H1 (cell line): ENCODE measurements at regions of chr2 and their contacts with region 1.

Region 1: GRCh38 chr2:12931186-12931844 is 214.6 kb downstream of the TRIB2 start:
- DNase-seq: no peak
- H3K4me3 ChIP-seq: no peak overlapping the region
- H3K27ac ChIP-seq: no peak overlapping the region
- H3K4me1 ChIP-seq: peaks cover 3 to 11% (median 10%) of the 10 kb centered on the region in 4 experiments; a peak in 5 of 7 replicates
- H3K27me3 ChIP-seq: no peaks in the 10 kb centered on the region
- CTCF ChIP-seq: peak in 2 of 3 experiments; percentile 61 to 85; a peak in 3 of 4 replicates
- EP300 ChIP-seq: no peak
- POLR2A ChIP-seq: no peak
- RAD21 ChIP-seq: peak; percentile 80 to 81

Region 2: DNA sequence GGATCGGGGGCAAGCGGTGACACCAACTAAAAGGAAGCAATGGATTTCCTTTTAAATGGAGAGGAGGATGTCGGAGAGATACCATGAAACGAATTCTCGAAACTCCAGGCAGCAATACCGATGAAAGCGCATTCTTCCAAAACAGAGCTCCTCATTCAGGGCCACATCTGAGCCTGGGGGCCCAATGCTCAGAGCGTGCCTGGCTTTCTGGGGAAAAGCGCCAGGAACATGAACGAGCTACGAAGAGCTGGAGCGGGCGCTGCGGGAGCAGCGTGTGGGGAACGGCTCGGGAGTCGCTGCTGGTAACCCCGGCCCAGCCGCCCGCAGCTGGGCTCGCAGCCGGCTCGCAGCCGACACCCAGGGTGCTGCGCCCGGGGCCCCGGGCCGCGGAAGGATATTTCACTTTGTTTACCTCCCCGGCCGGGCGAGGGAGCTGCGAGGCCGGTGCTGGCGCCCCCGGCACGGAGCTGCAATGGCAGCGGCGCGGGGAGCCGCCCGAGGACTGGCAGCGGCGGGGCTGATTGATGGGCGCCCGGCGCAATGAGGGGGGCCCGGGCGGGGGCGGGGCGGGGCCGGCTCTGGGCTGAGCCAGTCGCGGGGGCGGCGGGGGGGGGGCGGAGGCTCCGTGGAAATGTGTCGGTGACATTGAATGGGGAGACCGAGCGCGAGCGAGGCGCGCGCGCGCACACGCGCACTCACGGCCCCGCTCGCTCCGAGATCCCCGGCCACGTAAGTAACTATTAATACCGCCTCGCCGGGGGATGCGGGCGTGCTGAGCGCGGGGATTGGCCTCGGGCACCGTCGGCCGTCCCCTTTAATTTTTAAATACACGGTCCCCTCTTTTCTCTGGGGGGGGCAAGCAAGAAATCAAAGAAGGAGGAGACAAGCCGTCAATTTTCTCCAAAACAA is 214.8 kb before region 1 on chr2 and contains the start of gene TRIB2:
- CTCF ChIA-PET with region 1: interaction called, 22 read pairs
- POLR2A ChIA-PET with region 1: no interaction called
- DNase-seq: peak in 1 of 2 experiments; percentile 79
- H3K4me3 ChIP-seq: peak within 1 kb of the TSS; percentile 74 to 95 (median 83)
- H3K27ac ChIP-seq: peak within 1 kb of the TSS; percentile 70; the same call in 1 of the 2 replicates
- H3K4me1 ChIP-seq: peaks cover 2 to 12% (median 5%) of the 10 kb centered on the region in 4 experiments; a peak in 6 of 7 replicates
- H3K27me3 ChIP-seq: no peaks in the 10 kb centered on the region
- CTCF ChIP-seq: peak in 1 of 3 experiments; percentile 26; a peak in 1 of 4 replicates
- EP300 ChIP-seq: no peak
- POLR2A ChIP-seq: 0 out of 3 replicates have a peak, but pooled peaks of 1 of the 2 experiments have one; percentile 29
- RAD21 ChIP-seq: peak in 1 of 2 experiments; percentile 43; a peak in 1 of 4 replicates
- total RNA-seq, gene TRIB2: 57.0 and 57.3 TPM in 2 replicates

Region 3: DNA sequence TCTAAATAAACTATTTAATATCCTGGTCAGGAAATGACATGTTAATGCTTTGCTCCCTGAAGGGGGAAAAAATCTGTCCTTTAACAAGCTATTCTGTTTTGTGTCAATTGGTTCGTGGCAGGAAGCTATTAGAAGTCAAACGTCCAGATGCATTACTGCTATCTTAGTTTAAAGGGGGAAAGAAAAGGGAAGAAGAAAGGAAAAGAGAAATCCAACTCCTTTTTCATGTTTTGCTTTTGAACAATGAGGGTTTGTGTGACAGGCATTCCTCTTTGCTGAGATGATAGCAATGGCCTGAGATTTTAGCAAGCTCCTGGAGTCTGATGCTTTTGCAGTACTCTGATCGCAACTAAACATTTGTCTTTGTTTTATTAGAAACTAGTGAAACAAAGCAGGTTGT is 189.9 kb before region 1 on chr2:
- CTCF ChIA-PET with region 1: interaction called, 11 read pairs
- POLR2A ChIA-PET with region 1: no interaction called
- DNase-seq: no peak
- H3K4me3 ChIP-seq: no peak overlapping the region
- H3K27ac ChIP-seq: no peak overlapping the region
- H3K4me1 ChIP-seq: no peaks in the 10 kb centered on the region
- H3K27me3 ChIP-seq: no peaks in the 10 kb centered on the region
- CTCF ChIP-seq: no peak
- EP300 ChIP-seq: no peak
- POLR2A ChIP-seq: no peak
- RAD21 ChIP-seq: no peak

Region 4: GRCh38 chr2:12839339-12839738 is 92.0 kb before region 1 on chr2:
- CTCF ChIA-PET with region 1: no interaction called
- POLR2A ChIA-PET with region 1: no interaction called
- DNase-seq: no peak
- H3K4me3 ChIP-seq: no peak overlapping the region
- H3K27ac ChIP-seq: no peak overlapping the region
- H3K4me1 ChIP-seq: no peaks in the 10 kb centered on the region; a peak in 1 of 7 replicates
- H3K27me3 ChIP-seq: no peaks in the 10 kb centered on the region
- CTCF ChIP-seq: no peak
- EP300 ChIP-seq: no peak
- POLR2A ChIP-seq: no peak
- RAD21 ChIP-seq: no peak

Region 5: DNA sequence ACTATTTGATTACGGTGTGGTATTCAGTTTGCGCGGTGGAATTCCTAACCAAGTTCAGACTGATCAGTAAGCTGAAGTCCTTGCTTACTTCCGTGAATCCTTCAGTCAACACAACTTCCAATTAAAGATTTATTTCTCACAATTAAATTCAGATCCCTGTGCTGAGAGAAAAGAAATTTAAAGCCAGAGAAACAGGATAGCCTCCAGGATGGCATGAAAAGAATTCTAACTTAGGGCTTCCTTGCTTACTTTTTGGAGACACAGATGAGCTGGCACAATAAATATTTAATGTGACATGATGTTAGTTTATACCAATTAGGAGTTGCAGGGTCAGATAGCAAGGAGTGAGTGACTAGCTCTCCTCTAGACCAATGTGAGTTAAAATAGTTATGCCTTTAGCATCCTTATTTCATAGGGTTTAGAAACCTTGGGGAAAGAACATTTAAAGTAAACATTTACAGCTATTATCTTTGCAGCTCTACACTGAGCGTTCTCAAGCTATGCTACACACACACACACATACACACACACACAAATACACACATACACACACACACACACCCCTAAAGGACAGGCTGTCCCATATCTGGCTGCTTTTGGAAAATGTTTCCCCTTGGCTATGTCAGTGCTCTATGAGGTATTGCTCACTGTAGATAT is 63.6 kb before region 1 on chr2:
- CTCF ChIA-PET with region 1: interaction called, 13 read pairs
- POLR2A ChIA-PET with region 1: no interaction called
- DNase-seq: no peak
- H3K4me3 ChIP-seq: no peak overlapping the region
- H3K27ac ChIP-seq: no peak overlapping the region
- H3K4me1 ChIP-seq: no peaks in the 10 kb centered on the region
- H3K27me3 ChIP-seq: no peaks in the 10 kb centered on the region
- CTCF ChIP-seq: no peak
- EP300 ChIP-seq: no peak
- POLR2A ChIP-seq: no peak
- RAD21 ChIP-seq: no peak

Region 6: DNA sequence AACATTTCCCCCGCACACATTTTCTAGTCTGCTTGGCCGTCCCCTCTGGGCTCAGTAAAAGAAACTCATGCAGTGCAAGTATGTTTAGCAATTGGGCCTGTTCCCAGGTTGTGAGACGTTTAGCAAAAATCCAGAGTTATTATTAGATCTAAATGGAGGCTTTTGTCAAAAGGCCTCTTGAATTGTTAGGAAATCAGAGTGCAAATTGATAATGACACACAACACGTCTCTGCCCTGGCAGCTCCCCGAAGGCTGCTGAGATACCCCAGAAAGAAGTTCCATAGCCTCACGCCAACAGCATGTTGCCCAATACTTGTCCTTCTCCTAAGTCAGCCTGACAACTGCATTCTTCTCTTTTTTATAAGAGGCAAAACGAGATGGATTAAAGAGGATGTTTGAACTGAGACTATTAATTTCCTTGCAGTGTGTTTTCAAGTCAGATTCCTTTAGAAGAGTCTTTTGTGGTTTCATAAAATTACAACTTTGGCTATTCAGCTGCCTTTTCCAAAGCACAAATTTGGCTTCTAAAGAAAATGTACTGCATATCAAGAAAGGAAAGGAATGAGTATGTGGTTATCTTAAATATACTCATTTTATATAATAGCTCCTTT is 12.4 kb before region 1 on chr2:
- CTCF ChIA-PET with region 1: interaction called, 29 read pairs
- POLR2A ChIA-PET with region 1: no interaction called
- DNase-seq: no peak
- H3K4me3 ChIP-seq: no peak overlapping the region
- H3K27ac ChIP-seq: no peak overlapping the region
- H3K4me1 ChIP-seq: no peaks in the 10 kb centered on the region
- H3K27me3 ChIP-seq: no peaks in the 10 kb centered on the region
- CTCF ChIP-seq: no peak
- EP300 ChIP-seq: no peak
- POLR2A ChIP-seq: no peak
- RAD21 ChIP-seq: no peak

Region 7: GRCh38 chr2:12948961-12949353 is 17.6 kb after region 1 on chr2:
- CTCF ChIA-PET with region 1: interaction called, 40 read pairs
- POLR2A ChIA-PET with region 1: no interaction called
- DNase-seq: no peak
- H3K4me3 ChIP-seq: no peak overlapping the region
- H3K27ac ChIP-seq: no peak overlapping the region
- H3K4me1 ChIP-seq: no peaks in the 10 kb centered on the region
- H3K27me3 ChIP-seq: no peaks in the 10 kb centered on the region; a peak in 2 of 7 replicates
- CTCF ChIP-seq: no peak
- EP300 ChIP-seq: no peak
- POLR2A ChIP-seq: no peak
- RAD21 ChIP-seq: no peak

Region 8: GRCh38 chr2:13006829-13007717 is 75.8 kb after region 1 on chr2:
- CTCF ChIA-PET with region 1: interaction called, 22 read pairs
- POLR2A ChIA-PET with region 1: no interaction called
- DNase-seq: peak; percentile 29 to 81
- H3K4me3 ChIP-seq: 0 out of 8 replicates have a peak overlapping the region, but pooled peaks of 1 of the 4 experiments have one; percentile 2
- H3K27ac ChIP-seq: no peak overlapping the region
- H3K4me1 ChIP-seq: peaks cover 0 to 5% (median 0%) of the 10 kb centered on the region in 4 experiments; a peak in 1 of 7 replicates
- H3K27me3 ChIP-seq: no peaks in the 10 kb centered on the region
- CTCF ChIP-seq: peak; percentile 40 to 86 (median 75)
- EP300 ChIP-seq: no peak
- POLR2A ChIP-seq: no peak
- RAD21 ChIP-seq: peak; percentile 95 to 96